Heart right ventricle (tissue), 16 donors: ENCODE measurements at regions of chr1 and their contacts with region 1.

Region 1: DNA sequence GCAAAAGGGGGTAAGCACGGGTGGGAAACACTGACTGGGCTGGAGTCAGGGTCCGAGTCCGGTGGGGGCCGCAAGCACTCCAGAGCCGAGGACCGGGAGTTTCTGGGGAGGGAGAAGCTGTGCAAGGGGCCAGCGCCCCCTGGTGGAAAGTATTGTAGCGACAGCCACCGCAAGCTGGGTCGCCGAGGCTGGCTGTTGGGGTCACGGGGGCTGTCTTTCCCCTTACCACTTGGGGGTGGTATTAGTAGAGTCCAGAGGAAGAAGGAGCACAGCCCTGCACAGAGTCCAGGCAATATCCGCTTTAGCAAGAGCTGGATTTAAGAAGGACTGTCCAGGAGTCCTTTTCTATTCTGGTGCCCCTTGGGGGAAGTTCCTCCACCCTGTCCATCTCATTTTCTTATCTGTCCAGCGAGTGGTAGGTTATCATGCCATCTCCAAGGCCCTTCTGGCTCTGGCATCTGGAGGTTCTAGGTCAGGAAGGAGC is 17.9 kb upstream of the ETV3 start:
- DNase-seq: peak; percentile 70 to 78
- ATAC-seq: peak; percentile 68 to 88 (median 78)
- H3K4me3 ChIP-seq: peak overlapping the region in 5 of 10 donors; percentile 12 to 37 (median 24)
- H3K27ac ChIP-seq: peak overlapping the region in 3 of 10 donors; percentile 16 to 48 (median 28)
- H3K4me1 ChIP-seq: peaks cover 8 to 38% (median 23%) of the 10 kb centered on the region in 9 donors
- H3K27me3 ChIP-seq: peaks cover 0 to 6% (median 0%) of the 10 kb centered on the region in 7 donors
- CTCF ChIP-seq: peak; percentile 95 to 99 (median 99)

Region 2: GRCh38 chr1:157045251-157046218 is 110.6 kb before region 1 on chr1 and contains the start of gene ARHGEF11:
- intact Hi-C with region 1: no loop called
- DNase-seq: peak; percentile 93 to 94
- ATAC-seq: peak; percentile 95 to 99 (median 97)
- H3K4me3 ChIP-seq: peak within 1 kb of the TSS; percentile 23 to 72 (median 65)
- H3K27ac ChIP-seq: peak within 1 kb of the TSS; percentile 85 to 96 (median 91)
- H3K4me1 ChIP-seq: peaks cover 9 to 50% (median 44%) of the 10 kb centered on the region in 9 donors
- H3K27me3 ChIP-seq: peaks cover 0 to 12% (median 0%) of the 10 kb centered on the region in 7 donors
- CTCF ChIP-seq: no peak
- total RNA-seq, gene ARHGEF11: 23.7 to 34.5 (median 28.4) TPM

Region 3: DNA sequence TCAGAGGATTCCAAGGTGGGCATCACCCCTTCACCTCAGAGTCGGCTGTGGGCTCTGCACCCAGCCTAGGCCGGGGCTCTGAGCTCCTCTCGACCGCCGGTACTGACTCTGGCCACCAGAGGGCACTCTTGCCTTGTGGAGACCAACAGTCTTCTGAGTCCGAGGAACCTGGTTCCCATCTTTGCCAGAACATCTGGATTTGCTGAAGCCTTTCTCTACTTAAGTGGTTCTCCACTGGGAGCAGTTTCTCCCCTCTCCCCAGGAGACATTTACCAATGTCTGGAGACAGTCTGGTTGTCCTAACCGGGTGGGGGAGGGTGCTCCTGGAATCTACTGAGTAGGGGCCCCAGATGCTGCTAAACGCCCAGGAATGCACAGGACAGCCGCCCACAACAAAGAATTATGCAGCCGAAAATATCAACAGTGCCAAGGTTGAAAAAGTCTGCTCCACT is 65.9 kb before region 1 on chr1:
- intact Hi-C with region 1: loop called (anchors 1 to 2 kb)
- DNase-seq: peak; percentile 87 to 90
- ATAC-seq: peak; percentile 82 to 93 (median 88)
- H3K4me3 ChIP-seq: no peak overlapping the region
- H3K27ac ChIP-seq: no peak overlapping the region
- H3K4me1 ChIP-seq: peaks cover 0 to 19% (median 7%) of the 10 kb centered on the region in 9 donors
- H3K27me3 ChIP-seq: no peaks in the 10 kb centered on the region
- CTCF ChIP-seq: peak; percentile 88 to 99 (median 95)

Region 4: GRCh38 chr1:157138220-157139051 is 17.7 kb before region 1 on chr1 and contains the start of gene ETV3:
- intact Hi-C with region 1: loop called in 2 of 10 experiments (anchors 2 kb)
- DNase-seq: peak; percentile 88 to 93
- ATAC-seq: peak; percentile 97 to 99 (median 98)
- H3K4me3 ChIP-seq: peak within 1 kb of the TSS; percentile 89 to 99 (median 98)
- H3K27ac ChIP-seq: peak within 1 kb of the TSS; percentile 97 to 99 (median 98)
- H3K4me1 ChIP-seq: peaks cover 5 to 43% (median 22%) of the 10 kb centered on the region in 9 donors
- H3K27me3 ChIP-seq: no peaks in the 10 kb centered on the region
- CTCF ChIP-seq: no peak
- total RNA-seq, gene ETV3: 15.5 to 27.5 (median 21.4) TPM

Region 5: DNA sequence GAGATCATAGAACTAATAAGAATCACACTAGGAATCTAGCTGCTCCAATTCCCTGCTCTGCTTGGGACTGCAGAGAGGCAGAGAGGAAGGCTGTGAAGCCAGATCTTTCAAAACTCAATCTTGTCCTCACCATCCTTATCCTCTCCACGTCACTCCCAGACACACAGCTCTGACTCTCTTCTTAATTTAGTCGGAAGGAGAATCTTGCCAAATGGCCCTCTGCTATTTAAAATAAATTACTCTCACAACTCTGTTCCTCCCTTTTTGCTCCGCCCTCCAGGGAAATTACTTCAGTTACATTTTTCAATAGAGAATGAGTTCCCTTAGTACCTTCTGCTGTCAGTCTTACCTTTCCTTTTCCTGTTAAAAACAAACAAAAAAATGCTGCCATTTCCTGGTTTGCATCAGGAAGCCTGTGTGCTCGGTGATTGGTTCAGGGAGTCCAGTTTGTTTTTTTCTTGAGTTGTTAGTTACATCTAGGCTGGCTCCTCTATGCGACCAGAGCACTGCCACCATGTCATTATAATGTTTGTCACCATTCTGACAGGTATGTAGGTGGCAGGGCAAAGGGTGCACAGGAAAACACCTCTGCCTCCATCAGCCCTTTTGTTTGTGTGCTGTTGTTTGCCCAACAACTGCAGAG is 316.1 kb after region 1 on chr1:
- intact Hi-C with region 1: no loop called
- DNase-seq: no peak
- ATAC-seq: no peak
- H3K4me3 ChIP-seq: no peak overlapping the region
- H3K27ac ChIP-seq: no peak overlapping the region
- H3K4me1 ChIP-seq: no peaks in the 10 kb centered on the region
- H3K27me3 ChIP-seq: peaks cover 0 to 9% (median 0%) of the 10 kb centered on the region in 7 donors
- CTCF ChIP-seq: no peak